ENCODE measurements at regions of chr5 and their contacts with region 1.

Region 1: GRCh38 chr5:60677844-60678664 is 21.9 kb downstream of the DEPDC1B start:
- DNase-seq: peak in 1 of 10 donors; percentile 6
- H3K4me3 ChIP-seq: peak overlapping the region in 7 of 59 donors; percentile 2 to 43 (median 24)
- H3K27ac ChIP-seq: no peak overlapping the region
- H3K27me3 ChIP-seq: no peaks in the 10 kb centered on the region
- CTCF ChIP-seq: peak; percentile 47 to 85 (median 70)

Region 2: DNA sequence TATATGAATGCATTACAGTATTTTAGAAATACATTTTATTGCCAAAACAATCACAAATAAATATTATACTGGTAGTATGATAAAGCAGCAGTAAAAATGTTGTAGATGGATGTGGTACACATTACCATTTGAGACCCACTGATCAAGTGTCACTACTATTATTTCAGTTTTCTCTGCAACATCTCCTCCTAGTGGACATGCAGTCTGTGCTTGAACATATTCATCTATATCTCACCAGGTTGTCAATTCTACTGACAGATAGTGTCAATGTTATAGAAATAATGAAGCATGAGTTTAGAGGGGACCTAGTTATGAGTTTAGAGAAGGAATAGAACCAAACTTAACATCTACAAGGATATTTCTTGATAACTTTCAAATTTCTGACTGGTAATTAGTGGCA is 205.2 kb after region 1 on chr5:
- intact Hi-C with region 1: loop called in 1 of 2 experiments (anchors 5 kb)
- DNase-seq: no peak
- H3K4me3 ChIP-seq: no peak overlapping the region
- H3K27ac ChIP-seq: no peak overlapping the region
- H3K27me3 ChIP-seq: no peaks in the 10 kb centered on the region
- CTCF ChIP-seq: peak in 55 of 56 donors; percentile 34 to 74 (median 55)

Region 3: GRCh38 chr5:60929024-60929423 is 251.0 kb after region 1 on chr5:
- intact Hi-C with region 1: loop called in 1 of 2 experiments (anchors 5 kb)
- DNase-seq: no peak
- H3K4me3 ChIP-seq: no peak overlapping the region
- H3K27ac ChIP-seq: no peak overlapping the region
- H3K27me3 ChIP-seq: no peaks in the 10 kb centered on the region
- CTCF ChIP-seq: peak in 45 of 56 donors; percentile 18 to 68 (median 45)

Measured in dorsolateral prefrontal cortex (tissue), 120 donors.